ENCODE measurements at regions of chr18 and their contacts with region 1.

Region 1: GRCh38 chr18:22813648-22814328 is 119.3 kb upstream of the RBBP8 start:
- DNase-seq: peak; percentile 34
- CTCF ChIP-seq: peak; percentile 71

Region 2: DNA sequence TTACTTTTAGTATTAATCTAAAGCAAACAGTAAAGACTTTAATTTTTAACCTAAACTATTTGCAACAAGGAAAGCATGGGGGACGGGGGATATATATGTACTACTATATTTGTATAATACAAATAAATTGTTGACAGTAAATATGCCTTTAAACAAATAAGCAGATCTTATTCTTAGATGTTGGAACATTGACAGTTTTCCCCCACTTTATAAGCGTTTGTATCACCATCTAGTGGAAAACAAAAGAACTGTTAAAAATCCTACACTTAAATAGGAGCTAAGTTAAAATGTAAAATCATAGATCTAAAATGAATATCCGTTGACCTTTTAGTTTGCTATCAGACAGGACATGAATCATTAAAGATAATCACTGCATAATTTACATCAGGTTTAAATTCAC is 169.4 kb after region 1 on chr18:
- CTCF ChIA-PET with region 1: interaction called, 35 read pairs
- POLR2A ChIA-PET with region 1: no interaction called
- DNase-seq: peak; percentile 20
- CTCF ChIP-seq: peak; percentile 29